Activated T-helper 1 cell treated with anti-CD3 and anti-CD28 coated beads, Interleukin-12 subunit alpha, Interleukin-12 subunit beta, Interleukin-2, Interleukin-4 antibody, amounts not matched to agents 30 ng/mL and 10 ng/mL and 1 ng/mL, durations not matched to agents 14 hours and 24 hours and 36 hours (primary cell): ENCODE measurements at regions of chr1 and their contacts with region 1.

Region 1: DNA sequence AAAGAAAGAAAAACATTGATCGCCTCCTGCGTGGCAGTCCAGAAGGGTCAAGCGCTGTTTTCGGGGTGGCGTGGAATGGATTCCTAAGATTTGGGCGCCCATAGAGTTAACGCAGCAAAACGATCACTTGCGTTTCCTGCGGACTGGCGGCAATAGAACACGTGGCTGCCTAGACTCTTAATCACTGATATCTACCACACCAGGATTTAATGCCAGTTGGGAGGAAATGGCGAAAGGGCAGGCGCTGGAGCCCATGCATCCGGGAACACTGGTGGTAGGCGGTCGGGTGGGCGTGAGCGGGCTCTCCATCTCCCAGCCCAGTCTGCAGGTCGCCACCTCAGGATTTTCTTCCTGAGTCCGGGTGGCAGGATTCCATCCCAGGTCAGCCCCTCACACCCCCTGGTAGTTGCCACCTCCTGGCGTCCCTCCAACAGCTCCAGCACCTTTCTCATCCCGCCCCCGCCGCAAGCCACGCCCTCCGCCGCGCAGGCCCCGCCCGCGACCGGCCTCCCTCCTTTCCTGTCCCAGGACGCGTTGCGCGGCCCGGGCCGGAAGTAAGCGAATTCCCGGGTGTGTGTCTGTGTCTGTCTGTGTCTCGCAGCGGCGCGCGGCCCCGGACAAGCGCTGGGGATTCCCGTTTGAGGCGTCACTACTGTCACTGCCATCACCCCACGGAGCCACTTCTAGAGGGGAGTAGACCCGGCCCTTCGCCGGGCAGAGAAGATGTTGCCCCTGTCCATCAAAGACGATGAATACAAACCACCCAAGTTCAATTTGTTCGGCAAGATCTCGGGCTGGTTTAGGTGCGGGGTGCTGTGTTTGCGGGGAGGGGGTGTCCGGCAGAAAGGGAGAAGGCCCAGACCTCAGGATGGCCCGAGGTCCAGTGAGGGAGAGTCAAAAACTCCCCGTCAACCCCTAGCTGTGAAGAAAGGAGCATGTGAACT is at the start of gene SLC30A7:
- DNase-seq: peak; percentile 95
- H3K4me3 Mint-ChIP-seq: peak within 1 kb of the TSS; percentile 93
- H3K27ac Mint-ChIP-seq: peak within 1 kb of the TSS; percentile 96
- H3K4me1 Mint-ChIP-seq: peaks cover 64% of the 10 kb centered on the region
- H3K27me3 Mint-ChIP-seq: no peaks in the 10 kb centered on the region
- total RNA-seq, gene SLC30A7: 42.6 and 51.2 TPM in 2 replicates

Region 2: DNA sequence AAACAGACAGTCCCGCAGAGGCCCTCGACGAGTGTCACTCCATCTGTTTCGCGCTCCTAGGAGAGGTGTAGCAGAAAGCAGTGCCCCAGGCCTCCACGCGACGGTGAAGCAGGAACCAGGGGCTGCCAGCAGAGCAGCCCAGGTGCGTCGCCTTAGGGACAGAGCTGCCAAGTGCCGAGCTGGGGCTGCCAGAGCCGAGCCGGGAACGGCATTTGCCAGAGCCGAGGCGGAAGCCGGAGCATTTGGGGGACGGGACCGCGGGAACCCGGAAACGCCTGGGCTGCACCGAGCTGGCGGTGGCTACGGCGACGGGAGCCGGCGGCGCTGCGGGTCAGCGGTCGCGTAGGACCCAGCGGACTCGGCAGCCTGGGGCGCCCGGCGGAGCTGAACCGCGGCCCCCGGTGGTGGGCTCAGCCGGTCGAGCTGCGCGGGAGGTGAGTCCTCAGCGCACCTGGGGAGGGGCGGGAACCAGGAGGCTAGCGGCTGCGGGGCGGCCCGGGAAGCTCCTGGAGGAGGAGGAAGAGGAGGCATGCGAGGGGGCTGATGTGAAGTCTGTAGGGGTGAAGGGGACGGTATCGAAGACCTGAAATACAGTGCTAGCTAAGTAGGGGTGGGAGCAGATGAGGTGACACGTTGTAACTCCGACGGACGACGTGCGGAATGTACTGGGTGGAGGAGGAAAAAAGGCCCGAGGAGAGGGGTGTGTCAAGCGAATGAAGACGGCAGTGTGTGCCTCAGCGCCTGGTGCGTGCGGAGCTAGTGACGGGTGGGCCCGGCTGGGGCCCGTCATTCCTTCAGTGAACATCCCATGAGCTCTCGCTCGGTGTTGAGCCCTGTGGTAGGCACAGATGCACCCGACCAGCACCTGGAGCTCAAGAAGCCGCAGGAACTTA is 925.8 kb before region 1 on chr1 and contains the start of gene SLC35A3:
- intact Hi-C with region 1: loop called (anchors 10 kb)
- DNase-seq: peak; percentile 73
- H3K4me3 Mint-ChIP-seq: peak within 1 kb of the TSS; percentile 99
- H3K27ac Mint-ChIP-seq: peak within 1 kb of the TSS; percentile 95
- H3K4me1 Mint-ChIP-seq: peaks cover 22% of the 10 kb centered on the region
- H3K27me3 Mint-ChIP-seq: no peaks in the 10 kb centered on the region
- total RNA-seq, gene SLC35A3: 16.0 and 16.3 TPM in 2 replicates

Region 3: GRCh38 chr1:100249537-100250257 is 646.1 kb before region 1 on chr1 and contains the start of gene DBT:
- intact Hi-C with region 1: loop called (anchors 1 kb)
- DNase-seq: peak; percentile 92
- H3K4me3 Mint-ChIP-seq: no peak within 1 kb of the TSS
- H3K27ac Mint-ChIP-seq: no peak within 1 kb of the TSS
- H3K4me1 Mint-ChIP-seq: peaks cover 10% of the 10 kb centered on the region
- H3K27me3 Mint-ChIP-seq: peaks cover 12% of the 10 kb centered on the region
- total RNA-seq, gene DBT: 11.3 and 11.7 TPM in 2 replicates

Region 4: DNA sequence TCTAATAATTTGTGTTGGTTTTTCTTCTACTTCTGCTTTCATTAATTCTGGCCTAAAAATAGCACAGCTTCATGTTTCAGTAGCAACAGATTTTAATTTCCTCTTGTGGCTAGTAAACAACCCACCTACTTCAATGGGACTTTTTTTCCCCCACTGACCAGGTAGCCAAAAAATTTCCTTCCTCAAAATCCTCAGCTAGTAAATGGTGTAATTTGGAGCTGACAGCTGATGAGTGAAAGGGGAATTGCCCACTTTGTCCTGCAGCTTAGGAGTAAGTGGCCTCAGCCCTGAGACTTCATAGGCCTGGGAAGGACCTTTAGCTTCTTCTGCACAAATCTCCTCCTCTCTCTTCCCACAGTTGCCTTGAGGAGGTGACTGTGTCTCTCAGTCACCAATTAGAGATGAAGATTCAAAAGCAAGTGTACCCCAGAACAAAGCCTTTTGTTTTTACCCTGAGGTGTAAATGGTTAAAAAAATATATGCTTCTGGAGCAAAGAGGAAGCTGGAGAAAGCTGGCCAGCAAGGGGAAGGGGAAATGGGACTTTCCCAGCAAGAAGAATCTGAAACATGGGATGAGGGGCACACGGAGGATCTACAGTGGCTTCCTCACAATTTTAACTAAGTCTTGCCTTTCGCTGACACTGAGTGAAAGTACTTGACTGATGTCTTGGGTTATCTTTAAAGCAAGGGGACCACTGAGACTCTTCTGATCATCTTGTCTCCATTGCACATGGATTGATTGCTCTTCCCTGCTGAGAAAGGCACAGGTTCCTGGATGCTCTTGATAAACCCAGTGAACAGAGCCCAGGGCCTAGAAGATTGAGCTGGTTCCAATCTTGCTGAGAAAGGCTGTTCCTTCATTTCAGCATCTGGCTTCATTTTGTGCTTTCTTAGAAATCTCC is 212.1 kb before region 1 on chr1:
- intact Hi-C with region 1: no loop called
- DNase-seq: no peak
- H3K4me3 Mint-ChIP-seq: no peak overlapping the region
- H3K27ac Mint-ChIP-seq: no peak overlapping the region
- H3K4me1 Mint-ChIP-seq: no peaks in the 10 kb centered on the region
- H3K27me3 Mint-ChIP-seq: no peaks in the 10 kb centered on the region

Region 5: DNA sequence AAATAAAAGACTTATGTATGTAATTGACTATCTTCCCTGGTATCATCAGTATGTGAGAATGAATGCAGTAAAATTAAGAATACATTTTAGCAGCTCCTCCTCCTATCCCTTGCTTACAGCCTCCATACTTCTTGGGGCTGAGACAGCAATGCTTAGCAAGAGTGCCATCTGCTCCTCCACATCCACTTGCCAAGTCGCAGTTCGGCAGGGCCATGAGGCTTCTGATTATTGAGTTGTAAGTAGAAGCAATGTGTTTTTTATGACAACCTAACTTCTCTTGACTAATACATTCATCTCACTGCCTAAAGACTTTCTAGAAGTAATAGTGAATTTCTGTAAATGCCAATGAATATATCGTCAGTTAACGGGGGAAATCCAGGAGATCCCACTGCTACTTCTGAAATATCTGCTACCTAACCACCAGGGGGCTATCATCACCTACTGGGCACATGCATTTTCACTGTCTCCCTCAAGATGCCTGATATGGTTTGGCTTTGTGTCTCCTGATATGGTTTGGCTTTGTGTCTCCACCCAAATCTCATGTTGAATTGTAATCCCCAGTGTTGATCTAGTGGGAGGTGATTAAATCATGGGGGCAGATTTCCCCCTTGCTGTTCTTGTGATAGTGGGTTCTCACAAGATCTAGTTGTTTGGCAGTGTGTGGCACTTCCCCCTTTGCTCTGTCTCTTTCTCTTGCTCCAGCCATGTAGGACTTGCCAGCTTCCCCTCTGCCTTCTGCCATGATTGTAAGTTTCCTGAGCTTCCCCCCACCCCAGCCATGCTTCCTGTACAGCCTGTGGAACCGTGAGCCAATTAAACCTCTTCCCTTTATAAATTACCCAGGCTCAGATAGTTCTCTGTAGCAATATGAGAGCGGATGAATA is 60.8 kb before region 1 on chr1:
- intact Hi-C with region 1: no loop called
- DNase-seq: no peak
- H3K4me3 Mint-ChIP-seq: no peak overlapping the region
- H3K27ac Mint-ChIP-seq: no peak overlapping the region
- H3K4me1 Mint-ChIP-seq: no peaks in the 10 kb centered on the region
- H3K27me3 Mint-ChIP-seq: peaks cover 5% of the 10 kb centered on the region

Region 6: GRCh38 chr1:100921109-100921706 is 25.4 kb after region 1 on chr1:
- intact Hi-C with region 1: loop called (anchors 2 kb)
- DNase-seq: no peak
- H3K4me3 Mint-ChIP-seq: no peak overlapping the region
- H3K27ac Mint-ChIP-seq: no peak overlapping the region
- H3K4me1 Mint-ChIP-seq: peaks cover 29% of the 10 kb centered on the region
- H3K27me3 Mint-ChIP-seq: no peaks in the 10 kb centered on the region

Region 7: DNA sequence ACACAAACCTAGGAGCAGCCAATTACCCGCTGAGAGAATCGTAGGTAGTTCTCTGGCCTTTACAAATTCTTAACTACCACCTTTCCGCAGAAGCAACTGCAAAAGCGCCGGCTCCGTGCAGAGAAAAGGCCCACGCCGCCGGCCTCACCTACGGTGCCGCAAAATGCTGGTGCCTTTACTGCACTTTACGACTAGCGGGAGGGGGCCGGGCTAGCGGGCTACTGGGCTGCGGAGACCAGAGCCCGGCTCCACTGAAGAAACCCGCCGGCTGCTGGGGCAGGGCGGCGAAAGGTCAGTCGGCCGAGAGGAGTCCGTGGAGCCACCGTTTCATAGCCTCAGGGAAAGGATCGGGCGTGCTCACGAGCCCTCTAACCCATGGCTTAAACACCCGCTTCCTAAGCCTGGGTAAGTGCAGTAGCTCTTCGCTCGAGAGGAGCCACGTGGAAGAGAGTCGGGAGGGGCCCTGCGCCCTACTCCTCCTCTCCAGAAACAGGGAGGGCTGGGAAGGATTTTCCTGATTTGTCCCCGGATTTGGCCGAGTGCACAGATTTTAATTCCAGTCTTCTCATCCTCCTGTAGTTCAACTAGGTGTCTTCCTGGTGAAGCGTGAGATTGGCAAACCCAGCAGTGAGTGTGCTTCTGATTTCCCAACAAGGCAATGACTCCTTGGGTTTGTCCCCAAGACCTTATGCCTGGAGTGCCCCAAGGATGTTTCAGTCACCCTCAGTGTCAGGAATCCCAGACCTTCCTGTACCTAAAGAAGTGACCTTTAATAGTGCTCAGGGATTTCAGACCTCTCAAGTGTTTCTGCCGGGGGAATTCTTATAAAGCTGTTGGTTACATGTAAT is 130.1 kb after region 1 on chr1 and contains the start of gene DPH5:
- intact Hi-C with region 1: loop called (anchors 1 kb)
- DNase-seq: peak; percentile 84
- H3K4me3 Mint-ChIP-seq: peak within 1 kb of the TSS; percentile 93
- H3K27ac Mint-ChIP-seq: peak within 1 kb of the TSS; percentile 87
- H3K4me1 Mint-ChIP-seq: peaks cover 58% of the 10 kb centered on the region
- H3K27me3 Mint-ChIP-seq: no peaks in the 10 kb centered on the region
- total RNA-seq, gene DPH5: 31.7 and 32.2 TPM in 2 replicates